Mucosa of descending colon (tissue), 3 donors: ENCODE measurements at regions of chr3 and their contacts with region 1.

Region 1: GRCh38 chr3:33372218-33373081 is 67.8 kb downstream of the UBP1 start:
- DNase-seq: peak in 1 of 3 donors; percentile 71
- ATAC-seq: peak; percentile 81
- H3K4me3 ChIP-seq: no peak overlapping the region
- H3K4me1 ChIP-seq: no peaks in the 10 kb centered on the region
- CTCF ChIP-seq: peak; percentile 68

Region 2: GRCh38 chr3:32842531-32842931 is 529.9 kb before region 1 on chr3:
- intact Hi-C with region 1: no loop called
- DNase-seq: peak in 2 of 3 donors; percentile 19 to 33
- ATAC-seq: peak; percentile 65
- H3K4me3 ChIP-seq: no peak overlapping the region
- H3K4me1 ChIP-seq: no peaks in the 10 kb centered on the region
- CTCF ChIP-seq: no peak

Region 3: GRCh38 chr3:33131331-33132018 is 241.0 kb before region 1 on chr3:
- intact Hi-C with region 1: loop called (anchors 5 kb)
- DNase-seq: peak in 1 of 3 donors; percentile 68
- ATAC-seq: peak; percentile 83
- H3K4me3 ChIP-seq: no peak overlapping the region
- H3K4me1 ChIP-seq: no peaks in the 10 kb centered on the region
- CTCF ChIP-seq: peak; percentile 48

Region 4: GRCh38 chr3:33277193-33277882 is 95.1 kb before region 1 on chr3 and contains the start of gene FBXL2:
- intact Hi-C with region 1: no loop called
- DNase-seq: peak; percentile 25 to 52 (median 42)
- ATAC-seq: peak; percentile 63
- H3K4me3 ChIP-seq: peak within 1 kb of the TSS; percentile 26
- H3K4me1 ChIP-seq: peaks cover 13% of the 10 kb centered on the region
- CTCF ChIP-seq: no peak
- total RNA-seq, gene FBXL2: 0.43 to 5.6 (median 1.2) TPM